ENCODE measurements at regions of chr12 and their contacts with region 1.

Region 1: DNA sequence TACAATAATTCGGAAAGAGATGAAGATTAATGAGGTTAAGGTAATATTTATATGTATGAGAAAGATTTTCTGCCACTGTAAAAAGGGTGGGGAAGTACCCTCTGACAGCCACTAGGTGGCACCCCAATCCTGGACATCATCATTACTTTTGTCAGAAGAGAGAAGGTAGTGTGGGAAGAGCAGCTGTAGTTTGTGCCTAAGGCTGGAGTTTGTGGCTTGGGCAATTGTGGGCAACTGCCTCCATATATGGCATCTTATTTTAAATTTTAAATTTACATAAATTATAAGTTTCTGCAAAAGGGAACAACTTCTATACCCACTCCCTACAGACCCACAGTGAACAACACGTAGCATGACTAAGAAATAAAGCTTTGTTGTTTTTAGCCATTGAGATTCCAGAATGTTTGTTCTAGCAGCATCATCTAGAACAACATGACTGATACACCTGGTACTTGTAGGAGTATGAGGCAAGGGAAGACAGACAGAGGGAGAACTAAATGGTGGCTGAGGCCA is 34.4 kb upstream of the SYCP3 start:
- DNase-seq: peak; percentile 77
- H3K4me3 Mint-ChIP-seq: no peak overlapping the region
- H3K27ac Mint-ChIP-seq: no peak overlapping the region
- H3K4me1 Mint-ChIP-seq: peaks cover 27% of the 10 kb centered on the region
- H3K27me3 Mint-ChIP-seq: no peaks in the 10 kb centered on the region

Region 2: DNA sequence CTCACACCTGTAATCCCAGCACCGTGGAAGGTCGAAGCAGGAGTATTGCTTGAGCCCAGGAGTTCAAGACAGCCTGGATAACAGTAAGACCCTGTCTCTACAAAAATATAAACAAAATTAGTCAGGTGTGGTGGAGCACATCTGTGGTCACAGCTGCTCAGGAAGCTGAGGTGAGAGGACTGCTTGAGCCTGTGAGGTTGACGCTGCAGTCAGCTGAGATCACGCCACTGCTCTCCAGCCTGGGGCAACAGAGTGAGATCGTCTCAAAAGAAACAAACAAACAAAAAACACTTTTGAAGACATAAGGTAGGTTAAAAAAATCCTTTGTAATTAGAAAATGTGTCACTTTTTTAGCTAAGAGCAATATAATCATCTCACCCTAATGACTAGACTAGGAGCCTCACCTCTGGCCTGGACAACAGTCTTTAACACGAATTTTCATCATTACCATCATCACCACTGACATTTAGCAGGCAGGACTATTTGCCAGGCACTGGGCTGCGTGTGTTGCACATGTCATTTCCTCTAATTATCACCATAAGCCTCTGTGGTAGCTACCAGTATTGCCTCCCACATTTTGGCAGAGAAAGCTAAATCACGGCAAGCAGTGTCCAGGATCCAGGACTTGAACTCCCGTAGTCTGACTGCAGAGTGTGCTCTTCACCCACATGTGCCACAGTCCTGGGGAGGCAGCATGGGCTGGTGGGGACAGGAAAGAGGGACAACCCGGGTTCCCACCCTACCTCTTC is 29.8 kb before region 1 on chr12:
- CTCF ChIA-PET with region 1: no interaction called
- POLR2A ChIA-PET with region 1: no interaction called
- DNase-seq: no peak
- H3K4me3 Mint-ChIP-seq: no peak overlapping the region
- H3K27ac Mint-ChIP-seq: peak overlapping the region; percentile 65
- H3K4me1 Mint-ChIP-seq: peaks cover 14% of the 10 kb centered on the region
- H3K27me3 Mint-ChIP-seq: no peaks in the 10 kb centered on the region

Region 3: GRCh38 chr12:101823891-101824290 is 50.2 kb after region 1 on chr12:
- CTCF ChIA-PET with region 1: interaction called, 61 read pairs
- POLR2A ChIA-PET with region 1: no interaction called
- DNase-seq: peak; percentile 86
- H3K4me3 Mint-ChIP-seq: peak overlapping the region; percentile 33
- H3K27ac Mint-ChIP-seq: peak overlapping the region; percentile 90
- H3K4me1 Mint-ChIP-seq: peaks cover 83% of the 10 kb centered on the region
- H3K27me3 Mint-ChIP-seq: no peaks in the 10 kb centered on the region

Region 4: DNA sequence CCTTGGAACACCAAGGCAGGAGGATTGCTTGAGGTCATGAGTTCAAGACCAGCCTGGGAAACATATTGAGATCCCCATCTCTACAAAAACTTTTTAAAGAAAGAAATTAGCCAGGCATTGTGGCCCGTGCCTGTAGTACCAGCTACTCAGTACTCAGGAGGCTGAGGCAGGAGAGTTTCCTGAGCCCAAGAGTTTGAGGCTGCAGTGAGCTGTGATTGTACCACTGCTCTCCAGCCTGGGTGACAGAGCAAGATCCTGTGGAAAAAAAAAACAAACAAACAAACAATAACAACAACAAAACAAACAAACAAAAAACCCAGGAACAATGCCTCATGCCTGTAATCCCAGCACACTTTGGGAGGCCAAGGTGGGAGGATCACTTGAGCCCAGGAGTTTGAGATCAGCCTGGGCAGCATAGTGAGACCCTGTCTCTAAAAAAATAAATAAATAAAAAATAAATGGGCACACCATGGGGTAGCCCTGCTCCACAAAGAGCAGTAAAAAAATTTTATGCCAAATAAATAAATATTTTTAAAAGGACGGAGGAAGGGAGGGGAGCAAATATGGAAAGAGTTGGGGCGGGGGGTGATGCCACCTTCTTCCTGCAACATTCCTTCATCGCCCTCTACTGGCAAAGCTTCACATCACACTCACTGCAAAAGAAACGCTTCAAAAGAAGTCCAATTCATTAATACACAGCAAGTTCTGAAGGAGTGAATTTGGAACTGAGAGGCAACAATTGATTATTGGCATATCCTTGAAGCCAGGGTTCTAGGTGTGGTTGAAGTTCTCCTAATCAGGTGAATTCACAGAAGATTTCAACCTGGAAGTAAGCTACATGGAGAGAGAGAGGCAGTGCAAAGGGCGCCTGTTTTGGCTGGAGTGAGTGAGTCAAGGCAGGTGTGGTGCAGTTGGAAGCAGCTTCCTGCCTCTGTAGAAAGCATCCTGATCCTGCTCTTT is 65.9 kb after region 1 on chr12:
- CTCF ChIA-PET with region 1: interaction called, 18 read pairs
- POLR2A ChIA-PET with region 1: no interaction called
- DNase-seq: peak; percentile 81
- H3K4me3 Mint-ChIP-seq: no peak overlapping the region
- H3K27ac Mint-ChIP-seq: no peak overlapping the region
- H3K4me1 Mint-ChIP-seq: peaks cover 15% of the 10 kb centered on the region
- H3K27me3 Mint-ChIP-seq: peaks cover 4% of the 10 kb centered on the region